Activated CD4-positive, alpha-beta T cell treated with anti-CD3 and anti-CD28 coated beads for 36 hours (primary cell): ENCODE measurements at regions of chr2 and their contacts with region 1.

Region 1: GRCh38 chr2:217988014-217988839 is 14.6 kb downstream of the TNS1 start:
- DNase-seq: peak; percentile 87
- ATAC-seq: peak; percentile 68
- H3K4me3 Mint-ChIP-seq: no peak overlapping the region
- H3K27ac Mint-ChIP-seq: no peak overlapping the region
- H3K4me1 Mint-ChIP-seq: peaks cover 5% of the 10 kb centered on the region
- H3K27me3 Mint-ChIP-seq: peaks cover 4% of the 10 kb centered on the region

Region 2: GRCh38 chr2:217886720-217887309 is 101.4 kb before region 1 on chr2:
- CTCF ChIA-PET with region 1: interaction called, 8 read pairs
- POLR2A ChIA-PET with region 1: no interaction called
- intact Hi-C with region 1: loop called in 1 of 2 experiments (anchors 2 kb)
- DNase-seq: peak; percentile 84
- ATAC-seq: peak; percentile 86
- H3K4me3 Mint-ChIP-seq: no peak overlapping the region
- H3K27ac Mint-ChIP-seq: no peak overlapping the region
- H3K4me1 Mint-ChIP-seq: no peaks in the 10 kb centered on the region
- H3K27me3 Mint-ChIP-seq: peaks cover 4% of the 10 kb centered on the region

Region 3: DNA sequence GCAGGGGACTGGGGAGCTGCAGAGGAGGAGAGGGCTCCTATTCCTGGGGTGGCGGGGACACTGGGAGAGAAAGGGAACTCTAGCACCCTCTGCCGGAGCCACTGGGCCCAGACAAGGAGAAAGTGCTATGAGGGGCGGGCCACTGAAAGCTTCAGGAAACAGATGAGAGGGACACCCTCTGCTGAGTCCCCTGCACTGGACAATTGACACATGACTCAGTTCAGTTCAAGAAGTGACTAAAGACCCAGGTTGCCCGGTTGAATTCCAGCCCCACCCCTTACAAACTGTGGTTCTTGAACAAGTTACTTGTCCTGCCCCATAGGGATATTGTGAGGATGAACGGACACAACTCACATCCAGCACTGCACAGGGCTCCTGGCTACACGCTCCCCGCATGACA is 85.8 kb after region 1 on chr2:
- CTCF ChIA-PET with region 1: interaction called, 3 read pairs
- POLR2A ChIA-PET with region 1: no interaction called
- intact Hi-C with region 1: loop called in 1 of 2 experiments (anchors 2 kb)
- DNase-seq: peak; percentile 59
- ATAC-seq: peak; percentile 64
- H3K4me3 Mint-ChIP-seq: no peak overlapping the region
- H3K27ac Mint-ChIP-seq: no peak overlapping the region
- H3K4me1 Mint-ChIP-seq: peaks cover 4% of the 10 kb centered on the region
- H3K27me3 Mint-ChIP-seq: peaks cover 4% of the 10 kb centered on the region